AG04450 (cell line): ENCODE measurements at regions of chr1 and their contacts with region 1.

Region 1: DNA sequence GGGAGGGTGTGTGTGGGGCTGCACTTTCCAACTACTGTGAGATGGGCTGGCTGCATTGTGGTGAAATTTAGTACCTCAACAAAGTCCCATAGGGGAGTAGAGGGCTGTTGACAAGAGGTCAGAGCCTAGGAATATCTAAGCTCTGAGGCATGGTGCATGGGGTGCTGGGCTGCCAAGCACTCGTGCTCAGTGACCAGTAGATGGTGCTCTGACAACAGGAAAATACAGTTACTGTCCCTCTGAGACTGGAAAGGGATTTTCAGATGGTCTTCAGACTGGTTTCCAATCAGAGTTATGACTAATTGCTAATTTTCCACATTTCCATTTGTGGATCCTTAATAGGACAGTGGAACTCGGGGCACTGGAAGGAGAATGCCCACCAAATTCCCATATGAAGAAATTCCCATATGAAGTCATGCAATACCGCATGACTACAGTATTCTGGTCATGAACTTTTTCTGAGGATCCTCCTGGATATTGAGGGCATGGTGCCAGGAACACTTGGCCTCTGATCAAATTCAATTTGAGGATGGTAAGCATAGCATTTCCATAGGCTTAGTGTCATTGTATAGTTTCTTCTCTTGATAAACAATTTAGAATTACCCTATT is 4.1 kb upstream of the CACNA1E start:
- DNase-seq: peak; percentile 27
- H3K4me3 ChIP-seq: no peak overlapping the region
- H3K27ac ChIP-seq: no peak overlapping the region
- H3K27me3 ChIP-seq: peaks cover 30% of the 10 kb centered on the region
- CTCF ChIP-seq: peak; percentile 76

Region 2: GRCh38 chr1:181676269-181676668 is 197.0 kb after region 1 on chr1:
- CTCF ChIA-PET with region 1: interaction called, 11 read pairs
- POLR2A ChIA-PET with region 1: no interaction called
- DNase-seq: no peak
- H3K4me3 ChIP-seq: no peak overlapping the region
- H3K27ac ChIP-seq: no peak overlapping the region
- H3K27me3 ChIP-seq: no peaks in the 10 kb centered on the region
- CTCF ChIP-seq: peak; percentile 43

Region 3: DNA sequence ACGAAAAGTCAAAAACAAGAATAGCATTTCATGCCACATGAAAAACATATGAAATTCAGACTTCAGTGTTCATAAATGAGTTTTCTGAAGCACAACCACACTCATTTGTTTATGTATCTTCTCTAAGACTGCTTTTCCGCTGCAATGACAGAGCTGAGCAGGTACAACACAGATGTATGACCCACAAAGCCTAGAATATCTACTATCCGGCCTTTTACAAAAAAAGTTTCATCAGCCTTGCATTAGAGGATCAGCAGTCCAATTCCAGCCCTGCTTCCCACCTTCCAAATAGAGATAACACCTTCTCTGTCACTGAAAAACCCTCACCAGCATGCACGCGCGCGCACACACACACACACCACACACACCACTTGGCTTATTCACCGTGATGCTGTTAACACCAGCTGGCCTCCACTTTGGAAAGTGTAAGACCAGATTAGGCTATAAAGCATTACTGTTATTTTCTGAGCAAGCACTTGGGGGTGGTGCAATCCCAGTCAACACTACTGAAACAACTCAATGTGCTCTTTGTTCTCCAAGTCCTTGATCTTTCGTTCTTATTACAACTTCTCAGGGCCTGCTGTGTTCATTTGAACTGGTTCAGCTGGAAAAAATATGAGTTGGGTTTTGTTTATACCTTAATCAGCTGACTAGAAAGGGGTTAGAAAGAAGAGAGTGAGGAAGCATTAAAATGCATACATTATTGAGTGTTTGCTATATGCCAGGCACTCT is 822.4 kb after region 1 on chr1:
- CTCF ChIA-PET with region 1: no interaction called
- POLR2A ChIA-PET with region 1: no interaction called
- DNase-seq: no peak
- H3K4me3 ChIP-seq: no peak overlapping the region
- H3K27ac ChIP-seq: no peak overlapping the region
- H3K27me3 ChIP-seq: no peaks in the 10 kb centered on the region
- CTCF ChIP-seq: no peak